ENCODE measurements at regions of chr1 and their contacts with region 1.

Region 1: DNA sequence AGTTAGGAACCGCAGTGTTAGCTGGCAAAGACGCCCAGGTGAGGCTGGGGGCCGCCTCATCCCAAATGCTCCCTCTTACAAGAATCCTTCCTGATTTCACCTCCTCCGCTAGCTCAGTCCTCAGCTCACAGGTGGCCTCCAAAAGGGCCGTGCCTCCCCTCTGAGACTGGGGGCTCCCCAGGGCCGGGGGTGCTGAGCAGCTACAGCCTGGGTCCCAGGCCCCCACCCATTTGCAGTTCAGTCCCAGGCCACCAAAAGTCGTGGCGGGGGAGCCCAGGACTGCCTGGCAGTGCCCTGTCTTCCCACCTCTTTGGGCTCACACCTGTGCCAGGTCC is 29.6 kb downstream of the RNU1-1 start:
- DNase-seq: no peak
- H3K4me3 ChIP-seq: no peak overlapping the region
- H3K27ac ChIP-seq: no peak overlapping the region
- H3K4me1 ChIP-seq: no peaks in the 10 kb centered on the region
- H3K27me3 ChIP-seq: no peaks in the 10 kb centered on the region
- CTCF ChIP-seq: no peak

Region 2: GRCh38 chr1:14778898-14779865 is 1705.3 kb before region 1 on chr1:
- CTCF ChIA-PET with region 1: interaction called, 16 read pairs
- POLR2A ChIA-PET with region 1: no interaction called
- intact Hi-C with region 1: no loop called
- DNase-seq: peak in 1 of 2 experiments; percentile 25
- H3K4me3 ChIP-seq: no peak overlapping the region
- H3K27ac ChIP-seq: no peak overlapping the region
- H3K4me1 ChIP-seq: no peaks in the 10 kb centered on the region
- H3K27me3 ChIP-seq: no peaks in the 10 kb centered on the region; the same call in 1 of the 2 replicates
- CTCF ChIP-seq: peak; percentile 62

Region 3: GRCh38 chr1:15426492-15427279 is 1057.8 kb before region 1 on chr1:
- CTCF ChIA-PET with region 1: no interaction called
- POLR2A ChIA-PET with region 1: no interaction called
- intact Hi-C with region 1: no loop called
- DNase-seq: peak in 1 of 2 experiments; percentile 45
- H3K4me3 ChIP-seq: no peak overlapping the region
- H3K27ac ChIP-seq: no peak overlapping the region
- H3K4me1 ChIP-seq: peaks cover 27% of the 10 kb centered on the region
- H3K27me3 ChIP-seq: no peaks in the 10 kb centered on the region
- CTCF ChIP-seq: no peak

Region 4: GRCh38 chr1:16498573-16499413 is 14.3 kb after region 1 on chr1:
- CTCF ChIA-PET with region 1: no interaction called
- POLR2A ChIA-PET with region 1: no interaction called
- intact Hi-C with region 1: no loop called
- DNase-seq: peak; percentile 43 to 90
- H3K4me3 ChIP-seq: peak overlapping the region; percentile 76; the same call in 1 of the 2 replicates
- H3K27ac ChIP-seq: no peak overlapping the region
- H3K4me1 ChIP-seq: no peaks in the 10 kb centered on the region
- H3K27me3 ChIP-seq: no peaks in the 10 kb centered on the region
- CTCF ChIP-seq: no peak

Region 5: DNA sequence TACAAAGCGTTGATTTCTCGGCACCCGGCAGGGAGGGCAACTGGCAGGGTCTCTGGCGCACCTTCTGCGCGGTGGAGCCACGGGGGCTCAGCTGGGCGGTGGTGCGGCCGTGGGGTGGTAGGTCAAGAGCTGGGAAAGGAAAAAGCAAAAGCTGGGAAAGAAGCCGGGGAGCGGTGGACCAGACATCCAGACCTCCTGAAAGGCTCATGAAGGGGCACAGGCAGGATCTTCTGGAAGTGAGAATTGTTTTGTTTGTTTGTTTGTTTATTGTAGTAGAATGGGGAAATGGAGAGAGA is 36.8 kb after region 1 on chr1:
- CTCF ChIA-PET with region 1: no interaction called
- POLR2A ChIA-PET with region 1: no interaction called
- intact Hi-C with region 1: no loop called
- DNase-seq: no peak
- H3K4me3 ChIP-seq: no peak overlapping the region
- H3K27ac ChIP-seq: no peak overlapping the region
- H3K4me1 ChIP-seq: peaks cover 5% of the 10 kb centered on the region
- H3K27me3 ChIP-seq: 0 out of 2 replicates have a peak, but pooled peaks cover 4% of the 10 kb centered on the region
- CTCF ChIP-seq: no peak